ENCODE measurements at regions of chr18 and their contacts with region 1.

Region 1: GRCh38 chr18:55522011-55522410 is 66.0 kb downstream of the TCF4 start:
- DNase-seq: no peak
- ATAC-seq: no peak
- H3K4me3 ChIP-seq: no peak overlapping the region
- H3K27ac ChIP-seq: no peak overlapping the region
- H3K4me1 ChIP-seq: peaks cover 6% of the 10 kb centered on the region
- H3K27me3 ChIP-seq: no peaks in the 10 kb centered on the region
- CTCF ChIP-seq: peak; percentile 10

Region 2: GRCh38 chr18:55500316-55501086 is 21.5 kb before region 1 on chr18:
- intact Hi-C with region 1: no loop called
- DNase-seq: no peak
- ATAC-seq: peak in 2 of 4 donors; percentile 37 to 53
- H3K4me3 ChIP-seq: no peak overlapping the region
- H3K27ac ChIP-seq: peak overlapping the region; percentile 40
- H3K4me1 ChIP-seq: peaks cover 30% of the 10 kb centered on the region
- H3K27me3 ChIP-seq: no peaks in the 10 kb centered on the region
- CTCF ChIP-seq: no peak

Region 3: GRCh38 chr18:55577812-55578539 is 56.0 kb after region 1 on chr18:
- intact Hi-C with region 1: loop called in 1 of 2 experiments (anchors 10 kb)
- DNase-seq: no peak
- ATAC-seq: peak; percentile 75 to 85 (median 80)
- H3K4me3 ChIP-seq: peak overlapping the region; percentile 57
- H3K27ac ChIP-seq: peak overlapping the region; percentile 78
- H3K4me1 ChIP-seq: peaks cover 66% of the 10 kb centered on the region
- H3K27me3 ChIP-seq: no peaks in the 10 kb centered on the region
- CTCF ChIP-seq: peak; percentile 27

Region 4: DNA sequence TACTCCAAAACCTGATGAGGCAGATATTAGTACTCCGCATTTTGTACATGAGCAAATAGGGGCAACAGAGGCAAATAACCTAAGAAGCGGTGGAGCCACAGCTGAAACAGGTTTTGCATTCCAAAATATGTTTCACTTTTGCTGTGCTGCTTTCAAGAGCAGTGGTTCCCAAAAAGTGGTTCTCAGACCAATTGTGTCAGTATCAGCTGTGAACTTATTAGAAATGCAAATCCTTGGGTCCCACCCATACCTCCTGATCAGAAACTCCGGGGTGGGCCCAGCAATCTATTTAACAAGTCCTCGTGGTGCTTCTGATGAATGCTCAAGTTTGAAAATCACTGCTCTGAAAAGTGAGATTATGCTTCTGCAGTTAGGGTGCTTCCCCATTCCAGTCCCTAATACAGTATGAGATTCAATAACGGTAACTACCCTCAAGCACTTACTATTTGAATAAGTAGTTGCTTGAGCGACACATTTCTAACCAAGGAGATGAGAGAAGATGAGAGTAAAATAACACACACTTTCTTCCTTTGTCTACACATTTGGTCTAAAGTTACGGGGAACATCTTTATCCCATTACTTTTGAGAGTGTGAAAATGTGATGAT is 83.8 kb after region 1 on chr18:
- intact Hi-C with region 1: no loop called
- DNase-seq: no peak
- ATAC-seq: no peak
- H3K4me3 ChIP-seq: no peak overlapping the region
- H3K27ac ChIP-seq: no peak overlapping the region
- H3K4me1 ChIP-seq: no peaks in the 10 kb centered on the region
- H3K27me3 ChIP-seq: no peaks in the 10 kb centered on the region
- CTCF ChIP-seq: no peak